ENCODE measurements at regions of chr9 and their contacts with region 1.

Region 1: DNA sequence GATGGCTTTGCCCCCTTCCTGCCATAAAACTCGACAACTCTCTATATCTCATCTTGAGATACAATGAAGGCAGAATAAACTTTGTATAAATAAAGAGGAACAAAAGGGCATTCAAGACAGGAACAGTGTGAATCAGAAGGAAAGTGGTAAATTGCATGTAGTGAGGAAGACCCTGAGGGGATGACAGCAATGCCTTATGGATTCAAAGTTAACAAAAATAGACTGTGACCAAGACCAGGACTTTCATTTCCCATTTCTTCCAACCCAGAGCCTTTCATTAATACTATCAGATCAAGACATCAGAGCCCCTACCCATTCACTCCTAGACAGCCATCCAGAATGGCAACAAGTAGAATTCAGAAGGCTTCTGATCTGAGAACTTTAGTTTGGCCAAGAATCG is 46.4 kb upstream of the ZNF462 start:
- DNase-seq: no peak
- H3K4me3 ChIP-seq: no peak overlapping the region
- H3K27ac ChIP-seq: no peak overlapping the region
- H3K4me1 ChIP-seq: no peaks in the 10 kb centered on the region
- H3K27me3 ChIP-seq: no peaks in the 10 kb centered on the region
- CTCF ChIP-seq: no peak
- EP300 ChIP-seq: no peak
- POLR2A ChIP-seq: no peak

Region 2: GRCh38 chr9:106751681-106752080 is 64.8 kb before region 1 on chr9:
- in situ Hi-C with region 1: no loop called
- intact Hi-C with region 1: loop called (anchors 2 kb)
- DNase-seq: no peak
- H3K4me3 ChIP-seq: no peak overlapping the region
- H3K27ac ChIP-seq: no peak overlapping the region
- H3K4me1 ChIP-seq: peaks cover 0 to 12% (median 2%) of the 10 kb centered on the region in 4 donors
- H3K27me3 ChIP-seq: no peaks in the 10 kb centered on the region
- CTCF ChIP-seq: no peak
- EP300 ChIP-seq: no peak
- POLR2A ChIP-seq: no peak

Region 3: GRCh38 chr9:106799146-106799545 is 17.4 kb before region 1 on chr9:
- in situ Hi-C with region 1: no loop called
- intact Hi-C with region 1: loop called (anchors 1 kb)
- DNase-seq: no peak
- H3K4me3 ChIP-seq: no peak overlapping the region
- H3K27ac ChIP-seq: no peak overlapping the region
- H3K4me1 ChIP-seq: peaks cover 0 to 31% (median 8%) of the 10 kb centered on the region in 4 donors
- H3K27me3 ChIP-seq: no peaks in the 10 kb centered on the region
- CTCF ChIP-seq: no peak
- EP300 ChIP-seq: no peak
- POLR2A ChIP-seq: no peak